ENCODE measurements at regions of chr6 and their contacts with region 1.

Region 1: DNA sequence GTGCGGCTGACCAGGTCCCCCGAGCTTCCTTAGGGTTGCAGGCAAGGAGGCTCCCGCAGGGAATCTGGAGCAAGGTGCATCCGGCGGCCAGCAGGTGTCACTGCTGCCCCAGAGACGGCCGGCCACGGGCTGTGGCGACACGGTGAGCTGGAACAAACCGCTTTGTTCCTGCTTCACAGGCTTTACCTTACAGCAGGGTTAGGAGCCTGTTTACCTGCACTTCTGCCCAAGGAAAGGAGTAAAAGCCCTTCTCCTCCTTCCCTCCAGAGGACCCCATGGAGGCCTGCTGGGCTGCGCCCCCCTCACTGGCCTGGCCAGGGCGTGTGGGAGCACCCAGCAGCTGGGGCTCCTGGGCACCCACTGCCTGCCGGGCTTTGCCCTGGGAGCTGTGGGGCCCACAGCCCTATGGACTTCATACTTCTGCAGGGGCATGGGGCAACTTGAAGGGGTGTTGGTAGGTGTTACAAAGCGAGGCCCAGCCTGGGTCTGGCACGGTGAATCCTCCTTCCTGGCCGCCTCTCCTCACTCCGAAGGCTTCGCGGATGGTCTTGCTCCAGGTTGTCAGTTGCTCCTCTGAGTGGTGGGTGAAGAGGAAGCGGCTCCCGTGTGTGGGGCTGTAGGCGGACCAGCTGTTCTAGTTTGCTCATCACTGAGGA is 88.4 kb downstream of the CDC5L start:
- DNase-seq: peak; percentile 81
- H3K4me3 Mint-ChIP-seq: no peak overlapping the region
- H3K27ac Mint-ChIP-seq: no peak overlapping the region
- H3K4me1 Mint-ChIP-seq: no peaks in the 10 kb centered on the region
- H3K27me3 Mint-ChIP-seq: peaks cover 5% of the 10 kb centered on the region

Region 2: GRCh38 chr6:44446628-44447306 is 29.1 kb before region 1 on chr6:
- CTCF ChIA-PET with region 1: interaction called, 14 read pairs
- POLR2A ChIA-PET with region 1: no interaction called
- intact Hi-C with region 1: no loop called
- DNase-seq: no peak
- H3K4me3 Mint-ChIP-seq: no peak overlapping the region
- H3K27ac Mint-ChIP-seq: no peak overlapping the region
- H3K4me1 Mint-ChIP-seq: no peaks in the 10 kb centered on the region
- H3K27me3 Mint-ChIP-seq: no peaks in the 10 kb centered on the region

Region 3: DNA sequence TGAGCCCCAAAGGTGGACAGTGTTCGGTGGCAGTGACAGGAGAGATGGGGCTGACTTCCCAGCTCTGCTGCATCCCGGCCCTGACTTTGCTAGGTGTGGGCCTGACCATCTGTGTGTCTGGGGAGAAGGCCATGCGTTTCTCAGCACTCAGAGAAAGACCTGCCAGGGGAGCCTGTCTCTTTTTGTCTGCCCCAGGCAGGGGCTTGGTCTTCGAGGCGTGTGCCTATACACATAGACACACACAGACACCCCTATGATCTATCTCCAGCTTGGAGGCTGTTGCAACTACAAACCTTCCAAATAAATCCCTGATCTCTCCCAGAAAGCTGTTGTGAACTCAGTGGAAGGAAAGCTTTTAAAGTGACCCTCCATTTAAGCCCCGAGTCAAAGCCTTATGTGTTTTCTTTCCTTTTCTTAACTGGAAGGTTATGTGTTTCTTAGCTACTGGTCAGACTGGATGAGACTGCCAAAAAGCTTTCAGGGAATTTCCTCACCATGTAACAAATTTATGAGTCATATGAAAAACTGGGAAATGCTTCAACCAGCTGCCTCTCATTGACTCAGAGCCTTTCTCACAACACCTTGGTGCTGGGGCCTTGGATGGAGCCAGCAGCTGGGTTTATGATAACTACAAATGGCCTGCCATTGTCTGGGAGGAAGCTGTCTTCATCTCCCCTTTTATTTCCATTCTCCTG is 14.2 kb after region 1 on chr6:
- CTCF ChIA-PET with region 1: interaction called, 19 read pairs
- POLR2A ChIA-PET with region 1: no interaction called
- intact Hi-C with region 1: no loop called
- DNase-seq: no peak
- H3K4me3 Mint-ChIP-seq: no peak overlapping the region
- H3K27ac Mint-ChIP-seq: no peak overlapping the region
- H3K4me1 Mint-ChIP-seq: no peaks in the 10 kb centered on the region
- H3K27me3 Mint-ChIP-seq: peaks cover 11% of the 10 kb centered on the region

Region 4: DNA sequence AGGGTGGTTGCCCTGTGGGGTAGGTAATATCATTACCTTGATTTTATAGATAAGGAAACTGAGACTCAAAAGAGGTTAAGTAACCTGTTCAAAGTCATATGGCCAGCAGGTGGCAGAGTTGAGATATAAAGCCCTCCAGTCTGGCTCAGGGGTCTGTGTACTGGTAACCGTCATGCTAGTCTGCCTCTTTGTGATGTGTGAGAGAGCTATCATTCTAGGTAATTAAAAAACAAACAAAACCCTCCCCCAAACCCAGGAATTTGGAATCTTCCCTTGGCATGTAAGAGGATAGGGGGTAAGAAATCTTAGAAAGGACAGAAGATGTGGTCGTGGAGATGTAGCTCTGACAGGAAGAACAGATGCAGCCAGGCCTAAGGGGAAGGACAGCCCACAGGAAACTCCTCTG is 117.6 kb after region 1 on chr6:
- CTCF ChIA-PET with region 1: interaction called, 16 read pairs
- POLR2A ChIA-PET with region 1: no interaction called
- intact Hi-C with region 1: no loop called
- DNase-seq: peak; percentile 71
- H3K4me3 Mint-ChIP-seq: no peak overlapping the region
- H3K27ac Mint-ChIP-seq: no peak overlapping the region
- H3K4me1 Mint-ChIP-seq: peaks cover 4% of the 10 kb centered on the region
- H3K27me3 Mint-ChIP-seq: peaks cover 10% of the 10 kb centered on the region

Region 5: DNA sequence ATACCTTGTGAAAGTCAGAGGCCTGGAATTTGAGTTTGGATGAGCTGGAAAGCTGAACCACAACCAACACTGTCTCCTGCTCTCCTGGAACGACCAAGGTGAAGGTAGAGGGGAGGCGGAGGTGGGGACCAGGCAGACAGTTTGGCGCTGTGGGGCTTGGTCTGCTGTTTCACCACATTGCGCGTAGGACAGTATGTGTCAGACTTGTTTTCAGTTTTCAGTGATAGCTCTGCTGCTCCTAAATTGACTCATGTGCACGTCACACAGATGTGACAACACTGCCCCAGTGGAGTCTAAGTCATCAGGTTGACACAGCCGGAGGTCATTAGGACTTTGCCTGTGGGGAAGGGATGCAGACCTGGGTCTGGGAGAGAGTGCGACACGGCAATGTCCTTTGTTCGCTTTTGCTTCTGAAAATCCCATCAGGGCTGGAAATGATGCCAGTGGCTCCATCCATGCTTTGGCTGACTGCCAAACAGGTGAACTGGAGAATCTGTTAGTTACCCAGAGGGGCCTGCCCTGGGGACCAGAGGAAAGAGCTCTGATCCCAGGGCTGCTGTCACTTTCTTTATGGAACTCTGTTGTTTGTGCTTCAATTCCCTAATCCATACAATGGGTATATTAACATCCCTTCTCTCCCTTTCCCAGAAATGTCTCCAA is 167.1 kb after region 1 on chr6:
- CTCF ChIA-PET with region 1: interaction called, 9 read pairs
- POLR2A ChIA-PET with region 1: no interaction called
- intact Hi-C with region 1: loop called (anchors 10 kb)
- DNase-seq: peak; percentile 88
- H3K4me3 Mint-ChIP-seq: peak overlapping the region; percentile 33
- H3K27ac Mint-ChIP-seq: peak overlapping the region; percentile 96
- H3K4me1 Mint-ChIP-seq: peaks cover 39% of the 10 kb centered on the region
- H3K27me3 Mint-ChIP-seq: no peaks in the 10 kb centered on the region

Region 6: GRCh38 chr6:45421709-45422502 is 946.0 kb after region 1 on chr6:
- CTCF ChIA-PET with region 1: interaction called, 4 read pairs
- POLR2A ChIA-PET with region 1: no interaction called
- intact Hi-C with region 1: loop called (anchors 10 kb)
- DNase-seq: peak; percentile 78
- H3K4me3 Mint-ChIP-seq: peak overlapping the region; percentile 91
- H3K27ac Mint-ChIP-seq: peak overlapping the region; percentile 97
- H3K4me1 Mint-ChIP-seq: peaks cover 41% of the 10 kb centered on the region
- H3K27me3 Mint-ChIP-seq: no peaks in the 10 kb centered on the region

Region 7: DNA sequence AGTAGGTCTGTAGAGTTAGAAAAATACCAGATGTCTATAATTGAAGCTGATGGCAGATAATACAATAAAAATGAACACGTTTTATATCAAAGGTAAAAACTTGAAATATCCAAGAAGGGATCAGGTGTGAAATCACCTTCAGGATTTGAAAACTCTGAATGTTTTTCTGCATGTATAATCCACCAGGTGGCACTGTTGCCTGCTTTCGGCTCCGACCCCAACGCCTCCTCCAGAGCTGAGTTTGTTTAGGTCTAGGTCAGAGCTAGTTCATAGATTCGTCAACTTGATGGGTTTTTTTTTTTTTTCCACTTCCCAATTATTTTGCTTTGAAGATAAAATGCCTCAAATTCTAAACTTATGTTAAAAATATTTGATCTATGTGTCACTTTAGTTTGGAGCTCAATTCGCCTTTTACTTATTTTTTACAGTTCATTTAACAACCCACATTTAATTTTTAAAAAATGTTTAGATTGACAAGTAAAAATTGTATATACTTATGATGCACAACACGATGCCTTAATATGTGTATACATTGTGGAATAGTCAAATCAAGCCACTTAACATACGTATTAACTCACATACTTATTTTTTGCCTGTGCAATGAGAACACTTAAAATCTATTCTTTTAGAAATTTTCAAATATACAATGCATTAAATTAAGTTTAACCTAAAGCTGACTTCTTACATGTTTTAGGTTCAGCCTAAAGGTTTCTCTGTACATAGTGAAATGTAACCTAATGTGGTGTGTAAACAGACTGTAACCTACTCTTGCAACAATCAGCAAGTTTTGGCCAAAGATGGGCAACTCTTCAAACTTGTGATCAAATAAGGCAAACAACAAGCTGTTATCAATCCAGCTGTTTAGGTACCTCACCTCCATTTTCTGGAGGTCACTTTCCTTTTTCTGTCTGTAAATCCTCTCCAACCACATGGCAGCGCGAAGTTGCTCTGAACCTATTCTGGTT is 1614.5 kb after region 1 on chr6:
- CTCF ChIA-PET with region 1: interaction called, 11 read pairs
- POLR2A ChIA-PET with region 1: no interaction called
- intact Hi-C with region 1: no loop called
- DNase-seq: peak; percentile 73
- H3K4me3 Mint-ChIP-seq: no peak overlapping the region
- H3K27ac Mint-ChIP-seq: no peak overlapping the region
- H3K4me1 Mint-ChIP-seq: no peaks in the 10 kb centered on the region
- H3K27me3 Mint-ChIP-seq: peaks cover 30% of the 10 kb centered on the region

Measured in activated CD4-positive, alpha-beta memory T cell treated with anti-CD3 and anti-CD28 coated beads for 36 hours (primary cell).